Activated B cell treated with CpG ODN at 0.5 μM for 24 hours (primary cell): ENCODE measurements at regions of chr7 and their contacts with region 1.

Region 1: GRCh38 chr7:116305485-116306408 is 95.4 kb downstream of the TES start:
- DNase-seq: no peak
- ATAC-seq: no peak
- H3K4me3 Mint-ChIP-seq: no peak overlapping the region
- H3K27ac Mint-ChIP-seq: no peak overlapping the region
- H3K4me1 Mint-ChIP-seq: no peaks in the 10 kb centered on the region
- H3K27me3 Mint-ChIP-seq: no peaks in the 10 kb centered on the region
- CTCF ChIP-seq: no peak

Region 2: DNA sequence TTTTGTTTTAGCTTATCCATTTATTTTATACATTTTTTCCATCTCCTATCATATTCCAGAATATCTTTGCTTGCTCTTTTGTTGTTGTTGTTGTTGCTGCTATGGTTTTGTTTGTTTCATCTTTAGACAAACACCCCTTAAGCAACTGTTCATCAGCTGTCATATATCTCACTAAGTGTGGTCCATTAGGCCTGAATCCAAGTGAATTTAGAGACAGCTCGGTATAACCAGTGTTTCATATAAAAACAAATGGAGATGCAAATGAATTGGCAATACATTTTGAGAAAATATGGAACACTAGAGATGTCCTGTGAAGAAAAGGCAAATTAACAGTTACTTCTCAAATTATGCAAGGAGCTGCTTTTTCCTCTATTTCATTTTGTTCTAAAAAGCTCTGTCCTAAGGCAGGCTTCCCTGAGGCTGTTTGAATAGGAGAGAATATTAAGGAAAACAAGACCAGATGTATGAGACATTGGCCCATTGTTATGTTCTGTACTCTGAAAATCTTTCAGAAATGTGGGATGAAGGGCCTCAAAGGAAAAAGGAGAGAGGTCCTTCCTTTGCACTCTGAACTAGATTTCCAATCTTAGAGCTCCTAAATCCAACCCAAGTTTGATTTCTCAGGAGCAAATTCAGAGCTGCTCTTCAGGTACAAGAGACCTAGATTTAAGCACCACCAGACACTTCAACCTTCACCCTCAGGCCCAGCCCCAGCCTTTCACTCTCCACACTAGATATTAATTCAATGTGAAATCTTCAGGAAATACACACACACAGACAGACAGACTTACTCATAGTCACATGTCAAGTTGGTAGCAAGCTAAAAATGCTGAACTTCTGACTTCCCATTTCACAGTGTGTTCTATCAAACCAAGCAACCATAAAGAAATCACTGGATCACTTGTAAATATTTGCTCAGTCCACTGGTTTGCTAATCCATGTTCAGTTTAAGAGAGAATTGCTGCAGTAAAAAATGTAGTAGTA is 280.6 kb before region 1 on chr7:
- CTCF ChIA-PET with region 1: no interaction called
- POLR2A ChIA-PET with region 1: no interaction called
- intact Hi-C with region 1: no loop called
- DNase-seq: no peak
- ATAC-seq: peak; percentile 37
- H3K4me3 Mint-ChIP-seq: no peak overlapping the region
- H3K27ac Mint-ChIP-seq: no peak overlapping the region
- H3K4me1 Mint-ChIP-seq: peaks cover 28% of the 10 kb centered on the region
- H3K27me3 Mint-ChIP-seq: no peaks in the 10 kb centered on the region
- CTCF ChIP-seq: no peak

Region 3: DNA sequence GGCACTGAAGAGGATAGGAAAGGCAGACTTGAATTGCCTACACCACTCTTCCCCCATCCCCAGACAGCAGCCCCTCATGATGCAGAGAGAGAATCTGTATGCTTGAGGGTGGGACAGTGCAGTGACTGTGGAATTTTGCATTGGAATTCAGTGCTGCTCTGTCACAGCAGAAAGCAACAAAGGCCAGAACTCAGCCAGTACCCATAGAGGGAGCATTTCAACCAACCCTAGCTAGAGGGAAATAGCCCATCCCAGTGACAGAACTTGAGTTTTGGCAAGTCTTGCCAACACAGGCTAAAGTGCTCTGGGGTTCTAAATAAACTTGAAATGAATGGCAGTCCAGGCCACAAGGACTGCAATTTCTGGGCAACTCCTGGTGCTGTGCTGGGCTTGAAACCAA is 15.0 kb before region 1 on chr7:
- CTCF ChIA-PET with region 1: no interaction called
- POLR2A ChIA-PET with region 1: no interaction called
- intact Hi-C with region 1: loop called (anchors 1 kb)
- DNase-seq: no peak
- ATAC-seq: no peak
- H3K4me3 Mint-ChIP-seq: no peak overlapping the region
- H3K27ac Mint-ChIP-seq: no peak overlapping the region
- H3K4me1 Mint-ChIP-seq: no peaks in the 10 kb centered on the region
- H3K27me3 Mint-ChIP-seq: peaks cover 4% of the 10 kb centered on the region
- CTCF ChIP-seq: no peak